Right cardiac atrium (tissue), 5 donors: ENCODE measurements at regions of chr7 and their contacts with region 1.

Region 1: DNA sequence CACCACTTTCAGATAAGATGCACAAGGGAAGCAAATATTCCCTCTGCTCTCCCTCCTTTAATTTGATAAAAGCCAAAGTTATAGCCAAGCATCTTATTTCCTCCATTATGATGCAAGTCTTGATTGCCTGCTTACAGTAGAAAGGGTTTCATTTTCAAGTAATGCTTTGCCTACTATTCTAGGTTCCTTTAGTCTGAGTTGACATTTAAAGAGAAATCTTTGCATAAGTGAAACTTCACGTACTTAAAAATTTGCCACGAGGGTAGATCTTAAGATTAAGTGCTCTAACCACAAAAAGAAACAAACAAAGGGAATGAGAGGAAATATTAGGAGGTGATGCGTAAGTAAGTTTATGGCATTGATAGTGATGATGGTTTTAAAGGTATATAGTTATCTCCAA is 78.1 kb upstream of the VWDE start:
- DNase-seq: no peak
- ATAC-seq: no peak
- H3K4me3 ChIP-seq: no peak overlapping the region
- H3K27ac ChIP-seq: no peak overlapping the region
- H3K4me1 ChIP-seq: no peaks in the 10 kb centered on the region
- H3K27me3 ChIP-seq: no peaks in the 10 kb centered on the region

Region 2: DNA sequence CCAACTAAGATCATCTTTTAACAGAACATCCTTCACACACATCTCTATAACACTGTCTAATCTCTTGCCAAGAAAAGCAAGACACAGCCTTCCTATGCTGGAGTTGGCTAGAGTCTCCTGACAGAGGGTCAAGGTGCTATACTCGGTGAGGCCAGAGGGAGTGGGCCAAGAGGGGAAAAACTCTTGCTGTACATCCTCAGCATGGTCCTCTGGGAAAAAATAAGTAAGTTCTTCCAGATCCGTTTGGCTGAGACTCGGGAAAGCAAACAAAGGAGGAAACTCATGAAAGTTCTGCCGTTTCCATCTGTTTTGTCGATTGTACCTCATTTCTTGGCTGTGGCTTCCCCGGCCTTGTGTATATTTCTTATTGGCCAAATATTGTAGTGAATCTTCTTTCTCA is 112.0 kb before region 1 on chr7:
- intact Hi-C with region 1: no loop called
- DNase-seq: no peak
- ATAC-seq: peak in 1 of 2 donors; percentile 61
- H3K4me3 ChIP-seq: no peak overlapping the region
- H3K27ac ChIP-seq: no peak overlapping the region
- H3K4me1 ChIP-seq: no peaks in the 10 kb centered on the region
- H3K27me3 ChIP-seq: no peaks in the 10 kb centered on the region

Region 3: DNA sequence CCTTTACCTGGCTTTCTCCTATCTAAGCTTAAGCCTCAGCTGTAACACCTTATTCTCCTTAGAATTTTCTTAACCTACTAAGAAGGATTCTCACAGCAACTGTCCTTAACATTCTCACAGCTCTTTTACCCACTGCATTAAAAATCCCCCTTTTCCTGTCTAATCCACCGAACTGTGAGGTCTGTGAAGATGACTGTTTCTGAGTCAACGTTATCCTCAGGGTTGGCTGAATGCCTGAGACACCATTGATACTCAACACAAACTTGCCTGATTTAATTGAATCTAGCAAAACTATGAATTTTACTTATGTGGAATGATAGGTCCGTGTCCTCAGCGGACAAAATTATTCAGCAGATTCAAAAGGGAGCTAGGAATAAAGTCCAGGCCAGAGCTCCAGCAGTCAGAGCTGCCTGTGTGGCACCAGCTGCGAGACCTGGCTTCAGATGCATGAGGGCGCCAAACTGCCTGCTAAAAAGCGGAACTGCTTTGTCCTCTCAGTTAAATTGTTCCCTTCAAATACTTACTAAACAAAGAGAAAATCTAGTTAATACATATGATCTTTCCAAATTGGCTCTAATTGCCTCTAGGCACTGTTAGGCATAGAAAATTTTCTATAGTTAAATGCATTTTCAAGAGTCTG is 44.7 kb before region 1 on chr7:
- intact Hi-C with region 1: loop called in 1 of 4 experiments (anchors 10 kb)
- DNase-seq: peak in 2 of 3 donors; percentile 42 to 59
- ATAC-seq: no peak
- H3K4me3 ChIP-seq: no peak overlapping the region
- H3K27ac ChIP-seq: no peak overlapping the region
- H3K4me1 ChIP-seq: no peaks in the 10 kb centered on the region
- H3K27me3 ChIP-seq: no peaks in the 10 kb centered on the region